Gastrocnemius medialis (tissue), 4 donors: ENCODE measurements at regions of chr2 and their contacts with region 1.

Region 1: GRCh38 chr2:190343500-190344275 is at the start of gene INPP1:
- DNase-seq: peak; percentile 33 to 54
- ATAC-seq: peak; percentile 66 to 72
- H3K4me3 ChIP-seq: peak within 1 kb of the TSS; percentile 58 to 82 (median 72)
- H3K27ac ChIP-seq: peak within 1 kb of the TSS; percentile 77 to 90 (median 89)
- H3K4me1 ChIP-seq: peaks cover 13 to 24% of the 10 kb centered on the region in 2 donors
- H3K27me3 ChIP-seq: no peaks in the 10 kb centered on the region
- CTCF ChIP-seq: no peak
- POLR2A ChIP-seq: peak; percentile 65 to 74
- total RNA-seq, gene INPP1: 5.6 to 9.9 (median 8.0) TPM

Region 2: GRCh38 chr2:190369635-190370034 is 25.9 kb after region 1 on chr2:
- in situ Hi-C with region 1: no loop called
- intact Hi-C with region 1: loop called (anchors 2 kb)
- DNase-seq: no peak
- ATAC-seq: no peak
- H3K4me3 ChIP-seq: no peak overlapping the region
- H3K27ac ChIP-seq: no peak overlapping the region
- H3K4me1 ChIP-seq: peaks cover 0 to 4% of the 10 kb centered on the region in 2 donors
- H3K27me3 ChIP-seq: no peaks in the 10 kb centered on the region
- CTCF ChIP-seq: no peak
- POLR2A ChIP-seq: no peak